ENCODE measurements at regions of chr14 and their contacts with region 1.

Region 1: DNA sequence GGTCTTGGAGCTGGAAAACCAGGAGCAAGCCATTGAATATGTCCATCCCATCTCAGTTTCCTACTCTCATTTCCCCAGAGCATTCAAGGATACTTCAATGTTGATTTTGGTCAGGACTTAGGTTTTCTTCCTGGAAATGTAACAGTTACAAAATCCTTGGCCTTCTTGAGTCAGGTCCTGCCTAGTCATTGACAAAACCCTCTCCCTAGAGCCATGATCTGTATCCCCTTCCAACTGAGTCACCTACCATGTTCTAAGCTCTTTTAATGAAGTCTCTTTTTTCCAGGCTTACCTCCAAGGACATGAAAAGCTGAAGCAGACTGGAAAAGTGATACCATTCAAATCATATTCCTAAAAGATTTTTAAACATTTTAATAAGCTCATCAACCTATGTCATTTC is 549.2 kb downstream of the GALC start:
- DNase-seq: peak; percentile 4
- ATAC-seq: no peak
- H3K4me3 ChIP-seq: no peak overlapping the region
- H3K27ac ChIP-seq: no peak overlapping the region
- H3K4me1 ChIP-seq: no peaks in the 10 kb centered on the region
- H3K27me3 ChIP-seq: no peaks in the 10 kb centered on the region
- CTCF ChIP-seq: no peak
- POLR2A ChIP-seq: no peak
- RAD21 ChIP-seq: no peak

Region 2: DNA sequence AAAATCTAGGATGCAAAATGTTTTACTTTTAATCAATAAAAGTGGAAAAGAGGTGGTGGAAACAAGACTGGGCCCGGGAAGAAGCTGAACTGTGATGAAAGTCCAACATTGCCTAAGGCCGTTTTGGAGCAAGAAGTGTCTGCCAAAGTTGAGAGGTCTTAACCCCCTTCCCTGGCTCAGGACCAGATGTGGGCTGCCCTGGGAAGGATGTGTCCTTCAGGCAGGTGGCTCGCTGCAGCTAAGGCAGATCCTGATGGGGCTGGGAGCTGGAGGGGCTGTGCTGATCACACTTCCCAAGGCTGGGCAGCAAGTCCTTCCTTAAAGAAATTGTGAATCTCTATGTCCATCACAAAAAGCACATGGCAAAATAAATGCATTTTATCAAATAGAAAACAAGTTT is 32.4 kb before region 1 on chr14:
- CTCF ChIA-PET with region 1: no interaction called
- POLR2A ChIA-PET with region 1: no interaction called
- dilution Hi-C with region 1: no loop called
- in situ Hi-C with region 1: no loop called
- intact Hi-C with region 1: loop called (anchors 1 kb)
- DNase-seq: no peak
- ATAC-seq: no peak
- H3K4me3 ChIP-seq: no peak overlapping the region
- H3K27ac ChIP-seq: no peak overlapping the region
- H3K4me1 ChIP-seq: no peaks in the 10 kb centered on the region
- H3K27me3 ChIP-seq: no peaks in the 10 kb centered on the region
- CTCF ChIP-seq: no peak
- POLR2A ChIP-seq: no peak
- RAD21 ChIP-seq: no peak

Measured in IMR-90 (cell line).